ENCODE measurements at regions of chr2 and their contacts with region 1.

Region 1: DNA sequence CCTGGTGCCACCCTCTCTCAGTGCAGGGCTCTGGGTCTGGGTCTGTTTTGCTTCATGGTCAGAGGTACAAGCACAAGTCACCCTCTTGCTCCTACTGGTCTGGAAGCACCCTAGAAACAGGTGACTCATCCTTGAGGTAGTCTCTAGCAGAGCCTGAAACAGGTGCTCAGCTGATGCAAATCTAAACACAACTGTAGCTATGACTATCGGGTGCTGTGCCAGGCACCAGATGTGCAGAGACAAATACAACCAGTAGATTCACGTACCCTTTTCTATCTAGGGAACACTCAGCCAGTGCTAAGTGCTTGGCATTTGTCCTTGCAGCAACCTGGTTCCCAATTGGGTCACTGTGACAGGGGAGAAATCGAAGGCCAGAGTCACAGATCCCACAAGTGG is 140.9 kb upstream of the MYCN start:
- DNase-seq: no peak
- H3K4me3 ChIP-seq: no peak overlapping the region
- H3K27ac ChIP-seq: no peak overlapping the region
- H3K4me1 ChIP-seq: peaks cover 0 to 7% (median 2%) of the 10 kb centered on the region in 4 experiments; a peak in 3 of 7 replicates
- H3K27me3 ChIP-seq: no peaks in the 10 kb centered on the region
- CTCF ChIP-seq: no peak
- EP300 ChIP-seq: no peak
- POLR2A ChIP-seq: no peak
- RAD21 ChIP-seq: no peak

Region 2: GRCh38 chr2:15636972-15637785 is 162.3 kb before region 1 on chr2:
- CTCF ChIA-PET with region 1: interaction called, 16 read pairs
- POLR2A ChIA-PET with region 1: no interaction called
- DNase-seq: peak; percentile 31 to 80
- H3K4me3 ChIP-seq: no peak overlapping the region
- H3K27ac ChIP-seq: no peak overlapping the region
- H3K4me1 ChIP-seq: no peaks in the 10 kb centered on the region; a peak in 1 of 7 replicates
- H3K27me3 ChIP-seq: no peaks in the 10 kb centered on the region
- CTCF ChIP-seq: peak; percentile 68 to 99 (median 92)
- EP300 ChIP-seq: no peak
- POLR2A ChIP-seq: 0 out of 3 replicates have a peak, but pooled peaks of 1 of the 2 experiments have one; percentile 26
- RAD21 ChIP-seq: peak; percentile 100

Region 3: DNA sequence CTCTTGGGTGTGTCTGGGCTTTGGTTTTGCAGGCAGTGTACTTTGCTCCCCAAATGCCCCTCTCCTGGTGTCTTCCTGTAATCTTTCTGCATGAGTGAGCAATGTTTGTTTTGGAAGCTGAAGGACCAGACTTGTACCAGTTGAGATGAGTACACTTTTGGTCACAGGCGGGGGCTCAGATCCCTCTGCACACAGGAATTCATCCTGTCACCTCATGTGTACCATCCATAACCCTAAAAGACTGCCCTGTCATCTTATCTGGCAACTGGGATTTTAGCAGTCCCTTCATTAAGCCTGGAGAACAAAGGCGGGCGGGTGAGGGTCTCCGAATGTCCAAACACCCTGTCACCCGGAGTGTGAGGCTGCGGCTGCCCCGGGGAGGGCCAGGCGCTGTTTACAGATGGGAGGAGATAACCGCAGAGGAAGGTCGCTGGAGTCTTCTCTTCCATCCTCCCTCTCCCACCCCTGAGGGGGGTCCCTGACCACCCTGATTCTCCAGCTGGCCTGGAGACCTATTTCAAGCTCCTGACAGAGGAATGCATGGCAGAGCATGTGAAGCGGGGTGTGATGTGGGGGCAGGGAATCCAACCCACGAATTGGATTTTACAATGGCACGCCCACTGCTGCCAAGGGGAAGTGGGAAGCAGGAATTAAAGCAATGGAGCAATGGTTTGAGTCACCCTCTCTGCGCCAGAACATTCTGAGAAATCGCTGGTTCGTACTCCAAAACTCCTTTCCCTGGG is 17.2 kb before region 1 on chr2:
- CTCF ChIA-PET with region 1: interaction called, 19 read pairs
- POLR2A ChIA-PET with region 1: interaction called, 3 read pairs
- DNase-seq: no peak
- H3K4me3 ChIP-seq: no peak overlapping the region
- H3K27ac ChIP-seq: no peak overlapping the region
- H3K4me1 ChIP-seq: no peaks in the 10 kb centered on the region
- H3K27me3 ChIP-seq: no peaks in the 10 kb centered on the region; a peak in 1 of 7 replicates
- CTCF ChIP-seq: no peak
- EP300 ChIP-seq: no peak
- POLR2A ChIP-seq: no peak
- RAD21 ChIP-seq: no peak

Region 4: DNA sequence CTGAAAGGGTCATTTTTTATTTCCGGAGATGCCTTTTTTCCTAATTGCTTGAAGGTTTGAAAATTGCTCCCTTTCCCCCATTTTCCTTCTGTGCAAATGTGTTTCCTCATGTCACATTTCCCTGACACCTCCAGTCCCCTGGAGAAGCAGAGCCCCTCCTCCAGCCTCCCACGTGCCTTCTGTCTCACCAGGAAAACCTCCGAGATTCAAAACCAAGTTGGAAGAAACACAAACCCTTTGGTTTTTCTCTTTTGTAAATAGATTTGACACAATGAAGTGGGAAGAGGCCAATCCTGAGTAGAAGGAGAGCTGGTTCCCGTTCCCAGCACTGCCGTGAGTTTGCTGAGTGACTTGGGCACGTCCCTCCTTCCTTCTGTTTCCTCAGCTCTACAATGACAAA is 15.5 kb after region 1 on chr2:
- CTCF ChIA-PET with region 1: interaction called, 14 read pairs
- POLR2A ChIA-PET with region 1: interaction called, 3 read pairs
- DNase-seq: no peak
- H3K4me3 ChIP-seq: no peak overlapping the region
- H3K27ac ChIP-seq: no peak overlapping the region
- H3K4me1 ChIP-seq: peaks cover 0 to 21% (median 5%) of the 10 kb centered on the region in 4 experiments; a peak in 3 of 7 replicates
- H3K27me3 ChIP-seq: no peaks in the 10 kb centered on the region
- CTCF ChIP-seq: no peak
- EP300 ChIP-seq: no peak
- POLR2A ChIP-seq: no peak
- RAD21 ChIP-seq: no peak

Region 5: DNA sequence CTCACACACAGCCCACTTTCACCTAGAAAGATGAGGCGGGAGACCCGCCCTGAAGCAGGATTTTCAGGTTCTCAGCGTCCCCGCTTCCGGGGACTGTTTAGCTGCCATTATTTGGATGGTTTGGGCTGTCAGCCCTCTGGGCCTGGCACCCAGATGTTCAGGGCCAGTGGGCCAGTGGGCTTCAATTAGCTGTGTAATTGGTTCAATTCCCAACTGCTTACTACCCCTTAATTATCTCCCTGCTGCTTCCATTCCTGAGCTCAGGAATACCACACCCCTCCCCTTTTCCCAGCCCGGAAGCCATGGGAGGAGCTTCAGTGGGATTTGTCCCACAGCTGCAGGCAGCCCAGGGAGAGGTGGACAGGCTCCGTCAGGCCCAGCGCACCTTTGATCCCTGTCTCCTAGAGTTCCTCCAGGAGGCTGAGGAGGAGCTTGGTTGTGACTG is 26.9 kb after region 1 on chr2:
- CTCF ChIA-PET with region 1: interaction called, 14 read pairs
- POLR2A ChIA-PET with region 1: no interaction called
- DNase-seq: no peak
- H3K4me3 ChIP-seq: no peak overlapping the region
- H3K27ac ChIP-seq: no peak overlapping the region
- H3K4me1 ChIP-seq: peaks cover 5 to 14% (median 8%) of the 10 kb centered on the region in 4 experiments; a peak in 6 of 7 replicates
- H3K27me3 ChIP-seq: no peaks in the 10 kb centered on the region
- CTCF ChIP-seq: no peak
- EP300 ChIP-seq: no peak
- POLR2A ChIP-seq: no peak
- RAD21 ChIP-seq: no peak

Region 6: DNA sequence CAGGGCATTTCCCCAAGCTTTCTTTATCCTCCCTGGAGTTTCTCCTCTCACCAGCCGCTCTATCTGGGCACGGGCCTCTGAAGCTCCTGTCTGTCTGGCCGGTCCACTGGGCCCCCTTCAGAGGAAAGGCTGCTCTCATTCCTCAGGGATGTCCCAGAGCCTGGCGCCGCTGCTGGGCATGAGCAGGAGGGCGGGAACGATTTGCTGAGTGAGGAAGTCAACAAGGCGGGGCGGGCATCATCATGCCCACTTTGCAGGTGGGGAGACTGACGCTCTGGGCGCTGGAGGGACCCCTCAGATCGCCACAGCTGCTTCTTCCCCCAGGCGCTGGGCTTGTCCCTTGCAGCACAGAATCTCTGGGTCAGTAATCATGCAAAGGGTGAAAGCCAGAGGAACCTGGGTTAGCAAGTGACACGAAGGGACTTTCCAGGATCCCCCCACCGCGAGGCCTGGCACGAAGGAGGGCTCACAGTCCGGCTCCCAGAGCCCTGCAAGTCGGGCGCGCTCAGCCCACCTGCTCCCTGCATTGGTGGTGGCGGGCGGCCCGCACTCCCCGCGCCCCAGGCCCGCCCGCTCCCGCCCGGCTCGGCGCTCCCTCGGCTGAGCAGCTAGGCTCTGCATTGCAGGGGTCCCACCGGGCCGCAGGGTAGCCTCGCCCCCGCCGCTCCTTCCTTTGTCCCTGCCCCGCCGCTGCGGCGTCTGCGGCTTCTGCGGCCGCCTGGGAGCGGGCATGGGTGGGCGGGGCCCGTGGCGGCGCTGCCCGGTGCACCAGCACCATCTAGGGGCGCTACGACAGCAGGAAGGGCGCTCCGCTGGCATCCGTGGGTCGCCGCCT is 708.4 kb after region 1 on chr2:
- CTCF ChIA-PET with region 1: interaction called, 16 read pairs
- POLR2A ChIA-PET with region 1: no interaction called
- DNase-seq: peak; percentile 27 to 82
- H3K4me3 ChIP-seq: peak overlapping the region; percentile 36 to 61 (median 39)
- H3K27ac ChIP-seq: no peak overlapping the region
- H3K4me1 ChIP-seq: peaks cover 0 to 7% (median 6%) of the 10 kb centered on the region in 4 experiments; a peak in 4 of 7 replicates
- H3K27me3 ChIP-seq: peaks cover 0 to 4% (median 0%) of the 10 kb centered on the region in 4 experiments; a peak in 2 of 7 replicates
- CTCF ChIP-seq: peak; percentile 77 to 82 (median 82)
- EP300 ChIP-seq: peak in 1 of 2 experiments; percentile 48; a peak in 1 of 3 replicates
- POLR2A ChIP-seq: no peak
- RAD21 ChIP-seq: peak; percentile 93 to 95